Esophagus squamous epithelium (tissue), 5 donors: ENCODE measurements at regions of chr6 and their contacts with region 1.

Region 1: DNA sequence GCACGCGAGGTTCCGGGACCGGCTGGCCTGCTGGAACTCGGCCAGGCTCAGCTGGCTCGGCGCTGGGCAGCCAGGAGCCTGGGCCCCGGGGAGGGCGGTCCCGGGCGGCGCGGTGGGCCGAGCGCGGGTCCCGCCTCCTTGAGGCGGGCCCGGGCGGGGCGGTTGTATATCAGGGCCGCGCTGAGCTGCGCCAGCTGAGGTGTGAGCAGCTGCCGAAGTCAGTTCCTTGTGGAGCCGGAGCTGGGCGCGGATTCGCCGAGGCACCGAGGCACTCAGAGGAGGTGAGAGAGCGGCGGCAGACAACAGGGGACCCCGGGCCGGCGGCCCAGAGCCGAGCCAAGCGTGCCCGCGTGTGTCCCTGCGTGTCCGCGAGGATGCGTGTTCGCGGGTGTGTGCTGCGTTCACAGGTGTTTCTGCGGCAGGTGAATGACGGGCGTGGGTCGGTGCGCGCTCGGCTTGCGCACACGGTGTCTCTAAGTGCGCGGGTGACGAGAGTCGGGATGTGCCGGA is at the start of gene CDKN1A:
- DNase-seq: no peak
- H3K4me3 ChIP-seq: peak within 1 kb of the TSS; percentile 76 to 92 (median 91)
- H3K27ac ChIP-seq: peak within 1 kb of the TSS; percentile 94 to 99 (median 98)
- H3K4me1 ChIP-seq: peaks cover 44 to 62% (median 51%) of the 10 kb centered on the region in 3 donors
- H3K27me3 ChIP-seq: no peaks in the 10 kb centered on the region
- CTCF ChIP-seq: peak in 3 of 6 experiments; percentile 9 to 41 (median 39)
- POLR2A ChIP-seq: peak in 3 of 4 donors; percentile 83 to 100 (median 99)
- total RNA-seq, gene CDKN1A: 86.8 to 209 (median 131) TPM

Region 2: DNA sequence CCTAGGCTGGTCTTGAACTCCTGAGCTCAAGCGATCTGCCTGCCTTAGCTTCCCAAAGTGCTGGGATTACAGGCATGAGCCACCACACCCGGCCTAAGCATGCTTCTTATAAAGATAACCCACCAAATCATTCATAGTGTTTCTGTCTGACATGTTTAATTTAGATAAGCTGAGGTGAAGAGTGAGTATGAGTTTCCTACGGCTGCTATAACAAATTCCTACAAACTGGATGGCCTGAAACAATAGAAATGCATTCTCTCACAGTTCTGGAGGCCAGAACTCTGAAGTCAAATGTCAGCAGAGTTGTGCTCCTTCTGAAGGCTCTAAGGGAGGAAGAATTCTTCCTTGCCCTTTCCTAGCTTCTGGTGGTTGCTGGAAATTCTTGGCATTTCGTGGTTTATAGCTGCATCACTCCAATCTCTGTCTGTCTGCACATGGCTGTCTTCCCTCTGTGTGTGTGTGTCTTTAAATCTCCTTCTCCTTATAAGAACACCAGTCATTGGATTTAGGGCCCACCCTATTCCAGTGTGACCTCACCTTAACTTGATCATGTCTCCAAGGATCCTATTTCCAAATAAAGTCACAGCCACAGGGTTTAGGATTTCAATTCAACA is 518.3 kb before region 1 on chr6:
- intact Hi-C with region 1: no loop called
- DNase-seq: no peak
- H3K4me3 ChIP-seq: no peak overlapping the region
- H3K27ac ChIP-seq: no peak overlapping the region
- H3K4me1 ChIP-seq: no peaks in the 10 kb centered on the region
- H3K27me3 ChIP-seq: no peaks in the 10 kb centered on the region
- CTCF ChIP-seq: no peak
- POLR2A ChIP-seq: no peak

Region 3: GRCh38 chr6:36432151-36432633 is 246.4 kb before region 1 on chr6:
- intact Hi-C with region 1: loop called (anchors 10 kb)
- DNase-seq: no peak
- H3K4me3 ChIP-seq: no peak overlapping the region
- H3K27ac ChIP-seq: no peak overlapping the region
- H3K4me1 ChIP-seq: no peaks in the 10 kb centered on the region
- H3K27me3 ChIP-seq: no peaks in the 10 kb centered on the region
- CTCF ChIP-seq: no peak
- POLR2A ChIP-seq: no peak

Region 4: GRCh38 chr6:36623547-36624459 is 54.8 kb before region 1 on chr6:
- intact Hi-C with region 1: loop called (anchors 5 kb)
- DNase-seq: peak; percentile 45
- H3K4me3 ChIP-seq: no peak overlapping the region
- H3K27ac ChIP-seq: peak overlapping the region in 1 of 4 donors; percentile 34
- H3K4me1 ChIP-seq: peaks cover 10 to 52% (median 38%) of the 10 kb centered on the region in 3 donors
- H3K27me3 ChIP-seq: no peaks in the 10 kb centered on the region
- CTCF ChIP-seq: peak; percentile 62 to 95 (median 90)
- POLR2A ChIP-seq: no peak